Right cardiac atrium (tissue), 5 donors: ENCODE measurements at regions of chr2 and their contacts with region 1.

Region 1: DNA sequence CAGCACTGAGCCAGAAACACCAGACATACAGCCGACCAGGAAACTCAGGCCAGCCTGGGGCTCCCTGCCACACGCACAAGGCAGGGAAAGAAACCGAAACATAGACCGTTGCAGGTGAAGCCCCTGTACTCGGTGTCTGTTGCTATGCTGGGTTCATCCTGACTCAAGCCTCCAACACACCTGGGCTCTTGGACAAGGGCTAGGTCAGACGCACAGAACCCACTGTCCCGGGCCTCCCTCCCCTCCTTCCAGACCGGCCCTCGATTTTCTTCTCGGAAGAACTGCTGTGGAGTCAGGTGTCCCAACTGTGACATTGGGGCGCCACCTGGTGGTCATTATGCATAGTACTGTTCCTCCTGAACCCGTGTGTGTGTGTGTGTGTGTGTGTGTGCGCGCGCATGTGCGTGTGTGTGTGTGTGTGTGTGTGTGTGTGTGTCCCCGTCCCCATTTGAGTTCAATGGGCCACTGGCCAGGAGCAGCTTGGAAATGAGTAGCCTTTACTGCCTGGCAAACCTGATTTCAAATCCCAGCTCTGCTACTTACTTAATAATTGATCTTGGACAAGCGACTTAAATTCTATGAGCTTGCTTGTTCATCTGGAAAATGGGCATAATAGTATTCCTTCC is 55.4 kb upstream of the GLI2 start:
- DNase-seq: peak; percentile 83 to 89 (median 87)
- ATAC-seq: peak; percentile 77 to 81
- H3K4me3 ChIP-seq: no peak overlapping the region
- H3K27ac ChIP-seq: no peak overlapping the region
- H3K4me1 ChIP-seq: no peaks in the 10 kb centered on the region
- H3K27me3 ChIP-seq: no peaks in the 10 kb centered on the region

Region 2: DNA sequence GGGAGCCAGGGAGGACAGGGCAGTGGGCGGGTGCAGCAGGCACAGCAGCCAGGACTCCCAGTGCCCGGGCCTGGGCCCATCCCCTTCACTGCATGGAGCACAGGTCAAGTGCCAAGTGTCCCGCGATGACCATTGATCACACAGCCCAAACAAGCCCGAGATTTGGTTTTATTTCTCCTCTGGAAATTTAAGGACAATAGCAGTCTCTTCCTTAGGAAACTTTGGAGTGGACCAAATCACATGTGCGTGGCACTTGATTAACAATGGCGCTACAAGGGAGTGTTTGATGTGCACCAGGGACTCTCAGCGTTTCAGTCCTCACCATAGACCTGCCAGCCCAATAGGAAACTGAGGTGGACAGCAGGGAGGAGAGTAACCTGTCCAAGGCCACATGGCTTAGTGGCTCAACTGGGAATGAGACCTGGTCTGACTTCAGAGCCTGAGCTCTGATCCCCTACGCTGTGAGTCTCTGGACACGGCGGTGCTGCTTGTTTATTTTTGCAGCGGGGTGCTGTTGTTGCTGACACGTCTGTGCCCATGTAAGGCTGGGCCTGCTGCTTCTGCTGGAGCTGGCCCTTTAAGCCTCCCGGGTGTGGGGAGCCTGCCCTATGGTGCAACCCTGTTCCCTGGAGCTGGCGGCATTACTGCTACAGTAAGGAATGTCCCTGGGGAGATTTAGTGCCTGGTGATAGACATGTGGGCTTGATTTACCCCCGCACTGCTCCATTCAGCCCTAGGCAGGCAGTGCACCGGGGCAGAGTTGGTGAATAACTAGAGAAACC is 140.1 kb before region 1 on chr2:
- intact Hi-C with region 1: loop called in 1 of 4 experiments (anchors 10 kb)
- DNase-seq: peak; percentile 82 to 85 (median 83)
- ATAC-seq: peak; percentile 92 to 93
- H3K4me3 ChIP-seq: no peak overlapping the region
- H3K27ac ChIP-seq: peak overlapping the region; percentile 30
- H3K4me1 ChIP-seq: peaks cover 3% of the 10 kb centered on the region
- H3K27me3 ChIP-seq: no peaks in the 10 kb centered on the region

Region 3: DNA sequence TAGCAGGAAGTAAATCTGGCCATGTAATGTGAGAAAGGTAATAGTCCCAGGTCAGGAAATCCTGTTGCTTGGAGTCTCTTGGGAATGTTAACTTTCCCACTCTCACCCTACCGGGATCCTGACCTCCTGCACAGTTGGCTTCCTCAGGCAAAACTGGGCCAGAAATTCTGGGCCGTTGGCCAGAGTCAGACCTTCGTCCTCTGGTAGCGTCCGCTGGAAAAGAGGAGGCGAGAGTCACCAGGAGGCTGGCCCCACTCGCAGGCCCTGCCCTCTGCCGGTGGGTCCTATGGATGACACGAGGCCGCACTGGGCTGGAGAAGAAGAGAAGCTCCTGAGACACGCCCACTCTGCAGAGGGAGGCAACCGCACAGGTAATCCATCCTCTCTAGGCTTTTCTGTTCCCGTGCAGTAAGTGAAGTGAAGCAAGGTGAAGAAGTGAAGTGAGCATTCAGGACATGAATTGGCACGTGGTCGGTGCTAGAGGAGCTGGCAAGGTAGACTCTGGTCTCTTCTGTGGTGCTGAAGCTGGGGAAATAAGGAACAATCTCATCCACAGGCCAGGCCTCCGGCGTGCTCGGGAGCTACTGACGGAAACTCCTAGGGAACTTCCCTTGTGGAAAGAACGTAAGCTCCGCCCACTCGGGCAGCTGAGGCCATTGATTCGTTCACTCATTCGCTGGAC is 127.3 kb before region 1 on chr2:
- intact Hi-C with region 1: loop called in 2 of 4 experiments (anchors 10 kb)
- DNase-seq: peak; percentile 91 to 95 (median 94)
- ATAC-seq: peak; percentile 92 to 96
- H3K4me3 ChIP-seq: no peak overlapping the region
- H3K27ac ChIP-seq: no peak overlapping the region
- H3K4me1 ChIP-seq: peaks cover 21% of the 10 kb centered on the region
- H3K27me3 ChIP-seq: no peaks in the 10 kb centered on the region